ENCODE measurements at regions of chr10 and their contacts with region 1.

Region 1: GRCh38 chr10:29723726-29724125 is 89.0 kb upstream of the SVIL start:
- DNase-seq: no peak
- ATAC-seq: no peak
- H3K4me3 ChIP-seq: no peak overlapping the region
- H3K27ac ChIP-seq: no peak overlapping the region
- H3K4me1 ChIP-seq: peaks cover 9% of the 10 kb centered on the region; the same call in 1 of the 2 replicates
- H3K27me3 ChIP-seq: no peaks in the 10 kb centered on the region
- CTCF ChIP-seq: no peak

Region 2: DNA sequence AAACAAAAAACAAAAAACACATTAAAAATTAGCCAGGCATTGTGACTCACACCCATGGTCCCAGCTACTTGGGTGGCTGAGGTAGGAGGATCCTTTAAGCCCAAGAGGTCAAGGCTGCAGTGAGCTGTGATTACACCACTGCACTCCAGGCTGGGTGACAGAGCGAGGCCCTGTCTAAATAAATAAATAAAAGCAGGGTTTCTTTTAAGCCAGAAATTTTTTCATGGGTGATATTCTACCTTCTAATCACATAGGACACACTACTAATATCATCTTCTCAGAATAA is 74.8 kb before region 1 on chr10:
- CTCF ChIA-PET with region 1: no interaction called
- POLR2A ChIA-PET with region 1: no interaction called
- in situ Hi-C with region 1: no loop called
- intact Hi-C with region 1: no loop called
- DNase-seq: no peak
- ATAC-seq: peak; percentile 66; the same call in 1 of the 2 replicates
- H3K4me3 ChIP-seq: no peak overlapping the region
- H3K27ac ChIP-seq: peak overlapping the region; percentile 59; the same call in 1 of the 2 replicates
- H3K4me1 ChIP-seq: peaks cover 24% of the 10 kb centered on the region
- H3K27me3 ChIP-seq: no peaks in the 10 kb centered on the region
- CTCF ChIP-seq: no peak

Region 3: DNA sequence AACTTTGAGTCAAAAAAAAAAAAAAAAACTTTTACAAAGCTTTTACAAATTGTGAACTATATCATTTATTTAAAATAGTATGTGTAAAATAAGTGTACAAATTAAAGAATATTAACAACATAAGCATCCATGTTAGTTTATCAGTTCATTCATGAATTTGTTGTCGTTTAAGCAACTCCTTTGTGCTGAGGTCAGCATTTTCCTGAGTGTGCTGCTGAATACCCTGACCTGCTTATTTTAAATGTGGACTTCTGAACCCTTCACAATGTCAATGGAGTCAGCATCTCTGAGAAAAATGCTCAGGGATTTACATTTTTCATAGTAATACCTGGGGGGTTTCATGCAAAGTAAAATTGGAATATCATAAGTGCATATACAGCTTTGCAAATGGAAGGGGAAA is 36.4 kb after region 1 on chr10:
- CTCF ChIA-PET with region 1: no interaction called
- POLR2A ChIA-PET with region 1: interaction called, 16 read pairs
- in situ Hi-C with region 1: no loop called
- intact Hi-C with region 1: no loop called
- DNase-seq: no peak
- ATAC-seq: no peak
- H3K4me3 ChIP-seq: no peak overlapping the region
- H3K27ac ChIP-seq: no peak overlapping the region
- H3K4me1 ChIP-seq: peaks cover 5% of the 10 kb centered on the region
- H3K27me3 ChIP-seq: no peaks in the 10 kb centered on the region
- CTCF ChIP-seq: no peak

Region 4: GRCh38 chr10:29926693-29927048 is 202.9 kb after region 1 on chr10:
- CTCF ChIA-PET with region 1: no interaction called
- POLR2A ChIA-PET with region 1: no interaction called
- in situ Hi-C with region 1: no loop called
- intact Hi-C with region 1: no loop called
- DNase-seq: no peak
- ATAC-seq: no peak
- H3K4me3 ChIP-seq: no peak overlapping the region
- H3K27ac ChIP-seq: no peak overlapping the region
- H3K4me1 ChIP-seq: no peaks in the 10 kb centered on the region
- H3K27me3 ChIP-seq: no peaks in the 10 kb centered on the region
- CTCF ChIP-seq: no peak

Measured in Panc1 (cell line).